ACHN (cell line): ENCODE measurements at regions of chr2 and their contacts with region 1.

Region 1: GRCh38 chr2:41869542-41870264 is 178.1 kb upstream of the PKDCC start:
- DNase-seq: peak; percentile 67

Region 2: DNA sequence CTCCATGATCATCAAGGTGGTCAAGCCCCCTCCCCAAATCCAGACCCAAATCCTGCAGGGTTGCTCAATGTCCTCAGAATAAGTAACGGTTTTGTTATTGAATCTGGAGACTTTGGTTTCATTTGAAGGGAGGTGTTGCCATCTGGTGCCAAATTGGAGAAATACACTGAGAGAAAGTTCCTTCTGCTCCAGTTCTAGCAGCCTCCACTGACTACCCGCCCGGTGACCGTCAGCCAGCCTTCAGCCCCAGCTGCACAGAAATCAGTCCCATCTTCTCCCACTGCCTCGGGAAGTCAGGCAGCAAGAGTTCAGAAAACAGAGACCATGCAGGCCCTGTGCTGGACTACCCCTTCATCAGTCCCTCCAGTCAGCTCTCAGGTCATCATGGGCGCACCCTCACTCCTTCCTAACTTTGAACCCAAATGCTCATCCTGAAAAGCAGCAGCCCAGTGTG is 216.8 kb after region 1 on chr2:
- in situ Hi-C with region 1: loop called (anchors 25 kb)
- DNase-seq: peak; percentile 76

Region 3: GRCh38 chr2:42105330-42106256 is 235.9 kb after region 1 on chr2:
- in situ Hi-C with region 1: no loop called
- DNase-seq: no peak